ENCODE measurements at regions of chr21 and their contacts with region 1.

Region 1: GRCh38 chr21:44939532-44940115 is at the start of gene SLX9:
- DNase-seq: peak; percentile 66 to 83 (median 76)
- ATAC-seq: peak; percentile 93 to 94
- H3K4me3 Mint-ChIP-seq: peak within 1 kb of the TSS; percentile 82 to 93 (median 89)
- H3K27ac Mint-ChIP-seq: peak within 1 kb of the TSS; percentile 81 to 93 (median 88)
- H3K4me1 Mint-ChIP-seq: peaks cover 22 to 50% (median 41%) of the 10 kb centered on the region in 4 donors
- H3K27me3 Mint-ChIP-seq: no peaks in the 10 kb centered on the region
- polyA plus RNA-seq, gene SLX9: 11.7 to 13.5 (median 12.1) TPM

Region 2: DNA sequence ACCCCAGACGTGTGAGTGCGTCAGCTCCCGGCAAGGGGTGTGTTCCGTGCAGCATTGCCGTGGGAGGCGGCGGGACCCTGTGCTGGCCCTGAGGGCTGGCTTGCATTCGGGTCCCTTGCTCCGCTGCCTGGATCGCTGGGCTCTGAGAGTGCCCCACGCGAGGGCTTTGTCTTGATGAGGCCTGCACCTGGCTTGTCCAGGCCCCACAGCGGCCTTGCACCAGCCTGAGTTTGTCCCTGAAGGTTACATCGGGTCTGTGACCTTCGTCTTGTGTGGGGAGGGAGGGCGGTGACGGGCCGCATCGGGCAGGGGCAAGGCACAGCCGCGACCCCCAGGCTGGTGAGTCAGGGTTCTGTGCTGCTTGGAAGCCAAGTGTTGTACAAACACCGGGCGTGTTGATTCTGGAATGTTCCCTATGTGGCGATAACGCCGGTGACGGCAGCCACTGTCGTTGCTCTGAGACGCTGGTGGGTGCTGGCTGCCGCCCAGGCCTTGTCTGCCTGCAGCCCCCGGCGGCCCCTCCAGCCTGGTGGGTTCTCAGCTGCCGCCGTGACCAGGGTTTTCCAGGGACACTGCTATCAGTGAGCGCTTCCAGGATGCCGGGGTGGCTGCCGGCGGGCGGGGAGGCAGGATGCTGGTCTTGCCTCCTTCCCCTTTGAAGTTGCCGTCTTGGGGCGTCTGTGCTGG is 43.1 kb after region 1 on chr21:
- POLR2A ChIA-PET with region 1: no interaction called
- DNase-seq: peak in 2 of 10 donors; percentile 1 to 46
- ATAC-seq: no peak
- H3K4me3 Mint-ChIP-seq: no peak overlapping the region
- H3K27ac Mint-ChIP-seq: no peak overlapping the region
- H3K4me1 Mint-ChIP-seq: peaks cover 0 to 2% (median 0%) of the 10 kb centered on the region in 4 donors
- H3K27me3 Mint-ChIP-seq: no peaks in the 10 kb centered on the region

Region 3: GRCh38 chr21:45041351-45041805 is 101.8 kb after region 1 on chr21:
- POLR2A ChIA-PET with region 1: no interaction called
- DNase-seq: no peak
- ATAC-seq: no peak
- H3K4me3 Mint-ChIP-seq: no peak overlapping the region
- H3K27ac Mint-ChIP-seq: no peak overlapping the region
- H3K4me1 Mint-ChIP-seq: peaks cover 0 to 9% (median 1%) of the 10 kb centered on the region in 4 donors
- H3K27me3 Mint-ChIP-seq: peaks cover 2 to 13% (median 10%) of the 10 kb centered on the region in 5 donors

Region 4: GRCh38 chr21:45074048-45074817 is 134.6 kb after region 1 on chr21 and contains the start of gene ADARB1:
- POLR2A ChIA-PET with region 1: interaction called, 11 read pairs
- DNase-seq: peak; percentile 41 to 78 (median 68)
- ATAC-seq: peak; percentile 48
- H3K4me3 Mint-ChIP-seq: peak within 1 kb of the TSS; percentile 87 to 99 (median 97)
- H3K27ac Mint-ChIP-seq: peak within 1 kb of the TSS; percentile 87 to 98 (median 97)
- H3K4me1 Mint-ChIP-seq: peaks cover 23 to 49% (median 41%) of the 10 kb centered on the region in 4 donors
- H3K27me3 Mint-ChIP-seq: no peaks in the 10 kb centered on the region
- polyA plus RNA-seq, gene ADARB1: 2.9 to 7.7 (median 5.2) TPM

Measured in naive thymus-derived CD8-positive, alpha-beta T cell (primary cell).